ENCODE measurements at regions of chr11 and their contacts with region 1.

Region 1: DNA sequence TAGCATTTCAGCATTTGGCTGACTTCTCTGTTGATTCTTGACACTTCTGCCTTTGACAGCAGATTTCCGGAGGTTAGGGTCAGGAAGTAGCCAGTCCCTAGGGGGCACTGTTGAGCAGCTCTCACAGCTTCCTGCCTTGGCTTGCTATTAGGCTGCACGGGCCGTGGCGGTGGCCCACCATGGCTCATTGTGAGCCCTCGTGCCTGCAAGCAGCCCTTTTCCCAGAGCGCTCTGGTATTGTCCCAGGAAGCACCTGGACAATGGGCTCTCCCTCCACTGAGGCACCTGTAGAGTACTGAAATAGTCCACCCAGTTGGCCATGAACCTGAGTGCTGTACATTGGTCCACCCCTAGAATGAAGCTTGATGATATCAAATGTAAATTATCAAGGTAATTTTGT is 100.2 kb upstream of the GAL start:
- DNase-seq: peak; percentile 30 to 54
- ATAC-seq: peak in 1 of 2 experiments; percentile 78; a peak in 3 of 6 replicates
- H3K4me3 ChIP-seq: no peak overlapping the region
- H3K27ac ChIP-seq: no peak overlapping the region
- H3K4me1 ChIP-seq: peaks cover 27% of the 10 kb centered on the region
- CTCF ChIP-seq: peak; percentile 62
- EP300 ChIP-seq: no peak
- POLR2A ChIP-seq: no peak
- RAD21 ChIP-seq: peak in 1 of 2 experiments; percentile 24; a peak in 2 of 5 replicates

Region 2: GRCh38 chr11:68569357-68569756 is 14.7 kb before region 1 on chr11:
- CTCF ChIA-PET with region 1: interaction called, 18 read pairs
- POLR2A ChIA-PET with region 1: no interaction called
- DNase-seq: no peak
- ATAC-seq: no peak
- H3K4me3 ChIP-seq: no peak overlapping the region
- H3K27ac ChIP-seq: no peak overlapping the region
- H3K4me1 ChIP-seq: no peaks in the 10 kb centered on the region
- CTCF ChIP-seq: no peak
- EP300 ChIP-seq: no peak
- POLR2A ChIP-seq: no peak
- RAD21 ChIP-seq: no peak

Measured in A549 (cell line).